Endothelial cell of umbilical vein (primary cell): ENCODE measurements at regions of chr3 and their contacts with region 1.

Region 1: GRCh38 chr3:141360888-141361598 is 7.3 kb upstream of the ZBTB38 start:
- DNase-seq: peak; percentile 92
- H3K4me3 ChIP-seq: peak overlapping the region in 1 of 3 experiments; percentile 31
- H3K27ac ChIP-seq: peak overlapping the region; percentile 53
- H3K4me1 ChIP-seq: peaks cover 18% of the 10 kb centered on the region
- H3K27me3 ChIP-seq: no peaks in the 10 kb centered on the region
- CTCF ChIP-seq: peak; percentile 69 to 72
- POLR2A ChIP-seq: no peak

Region 2: DNA sequence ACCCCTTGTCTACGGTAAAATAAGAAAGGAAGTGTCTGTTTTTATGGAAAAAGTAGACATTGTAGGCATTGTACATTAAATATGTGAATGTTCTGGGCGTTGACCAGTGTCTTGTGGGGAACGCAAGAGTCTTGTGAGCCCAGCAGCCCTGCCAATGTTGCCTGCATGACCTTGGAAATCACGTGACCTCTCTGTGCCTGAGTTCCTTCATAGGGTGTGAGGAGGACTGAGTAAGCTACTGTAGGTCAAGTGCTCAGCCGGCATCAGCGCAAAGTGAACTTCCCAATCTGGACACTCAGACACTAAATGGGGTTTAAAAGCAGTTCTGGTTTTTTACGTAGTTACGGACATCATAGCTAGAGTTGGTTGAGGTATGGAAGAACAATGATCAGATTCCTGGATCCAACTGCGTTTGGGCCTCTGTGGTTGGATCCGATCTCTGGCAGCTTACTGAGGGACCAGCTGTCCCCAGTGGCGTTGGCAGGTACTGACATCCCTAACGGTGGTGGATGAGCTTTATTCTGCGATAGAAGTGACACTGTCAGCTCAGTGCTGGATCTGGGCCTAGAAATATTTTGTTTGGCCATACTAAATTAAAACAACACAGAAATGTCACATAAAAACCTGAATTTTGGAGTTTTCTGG is 246.1 kb before region 1 on chr3:
- CTCF ChIA-PET with region 1: no interaction called
- POLR2A ChIA-PET with region 1: no interaction called
- dilution Hi-C with region 1: no loop called
- intact Hi-C with region 1: no loop called
- DNase-seq: no peak
- H3K4me3 ChIP-seq: no peak overlapping the region
- H3K27ac ChIP-seq: no peak overlapping the region
- H3K4me1 ChIP-seq: no peaks in the 10 kb centered on the region
- H3K27me3 ChIP-seq: no peaks in the 10 kb centered on the region
- CTCF ChIP-seq: peak; percentile 22 to 24
- POLR2A ChIP-seq: no peak

Region 3: DNA sequence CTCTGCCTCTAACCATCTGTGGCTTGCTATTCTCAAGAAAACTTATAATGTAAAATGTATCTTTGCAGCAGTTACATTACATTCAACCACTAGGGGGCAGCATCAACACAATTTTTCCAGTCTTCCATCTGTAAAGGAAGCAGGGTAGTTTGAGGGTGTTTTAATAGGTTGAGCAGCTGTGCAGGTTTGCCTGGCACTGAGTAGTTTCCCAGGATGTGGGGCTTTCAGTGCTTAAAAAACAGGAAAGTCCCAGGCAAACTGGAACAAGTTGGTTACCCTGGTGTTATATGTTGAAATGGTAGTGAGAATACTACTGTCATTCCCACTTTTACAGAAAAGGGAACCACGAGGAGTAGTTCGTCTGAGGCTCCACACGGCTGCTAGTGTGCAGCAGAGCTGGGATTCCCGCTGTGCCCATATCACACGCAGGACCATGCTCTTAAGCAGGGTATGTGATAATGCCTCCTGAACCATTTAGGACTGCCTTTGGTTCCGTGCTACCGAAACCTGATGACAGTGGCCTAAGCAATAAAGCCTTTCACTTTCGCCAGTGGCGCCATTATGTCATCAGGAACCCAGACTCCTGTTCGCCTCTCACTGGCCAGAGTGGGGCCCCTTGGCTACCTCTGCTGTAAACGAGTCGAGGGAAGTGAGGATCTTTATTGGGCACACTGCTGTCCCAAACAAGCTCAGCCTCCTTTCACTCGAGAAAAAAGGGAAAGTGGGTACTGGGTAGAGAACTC is 57.4 kb before region 1 on chr3:
- CTCF ChIA-PET with region 1: interaction called, 25 read pairs
- POLR2A ChIA-PET with region 1: no interaction called
- dilution Hi-C with region 1: no loop called
- intact Hi-C with region 1: no loop called
- DNase-seq: peak; percentile 86
- H3K4me3 ChIP-seq: no peak overlapping the region
- H3K27ac ChIP-seq: no peak overlapping the region
- H3K4me1 ChIP-seq: no peaks in the 10 kb centered on the region
- H3K27me3 ChIP-seq: peaks cover 0 to 6% of the 10 kb centered on the region in 2 experiments
- CTCF ChIP-seq: peak; percentile 53 to 68
- POLR2A ChIP-seq: no peak

Region 4: DNA sequence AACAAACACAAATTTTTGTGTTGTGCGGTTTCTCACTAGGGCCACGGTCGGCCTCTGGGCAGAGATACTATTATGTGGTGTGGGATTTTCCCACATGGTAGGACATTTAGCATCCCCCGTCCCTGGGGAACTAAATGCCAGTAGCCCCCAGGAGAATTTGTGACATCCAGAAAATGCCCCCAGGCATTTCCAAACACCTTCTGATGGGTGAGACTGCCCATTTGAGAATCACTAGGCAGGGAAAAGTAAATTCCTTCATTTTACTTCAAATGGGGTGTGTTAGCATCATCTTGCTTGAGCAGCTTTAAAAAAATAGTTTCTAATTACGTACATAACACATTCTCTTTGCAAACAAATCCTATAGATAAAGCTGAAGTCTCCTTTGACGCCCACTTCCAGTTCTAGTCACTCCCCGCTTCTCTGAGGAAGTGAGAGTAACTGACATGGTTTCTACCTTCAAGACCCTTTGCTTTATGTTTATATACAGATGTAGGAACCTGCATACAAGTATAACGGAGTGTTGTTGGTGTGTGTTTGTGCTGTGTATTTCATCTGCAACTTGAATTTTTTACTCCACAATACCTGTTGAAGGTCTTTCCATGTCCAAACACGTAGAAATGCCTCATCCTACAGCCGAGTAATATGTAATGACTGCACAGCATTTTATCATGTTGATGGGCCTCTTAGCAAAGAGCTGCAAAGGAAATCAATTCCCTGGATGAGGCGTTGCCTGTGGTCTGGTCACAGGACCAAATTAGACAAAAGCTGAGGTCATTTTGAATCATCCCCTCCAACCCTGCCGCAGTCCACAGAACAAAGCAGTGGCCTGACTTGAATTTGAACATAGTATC is 24.1 kb before region 1 on chr3:
- CTCF ChIA-PET with region 1: interaction called, 15 read pairs
- POLR2A ChIA-PET with region 1: no interaction called
- dilution Hi-C with region 1: no loop called
- intact Hi-C with region 1: no loop called
- DNase-seq: no peak
- H3K4me3 ChIP-seq: no peak overlapping the region
- H3K27ac ChIP-seq: peak overlapping the region; percentile 61
- H3K4me1 ChIP-seq: peaks cover 26% of the 10 kb centered on the region
- H3K27me3 ChIP-seq: no peaks in the 10 kb centered on the region
- CTCF ChIP-seq: no peak
- POLR2A ChIP-seq: no peak

Region 5: GRCh38 chr3:141388823-141389621 is 28.0 kb after region 1 on chr3:
- CTCF ChIA-PET with region 1: interaction called, 11 read pairs
- POLR2A ChIA-PET with region 1: no interaction called
- dilution Hi-C with region 1: no loop called
- intact Hi-C with region 1: no loop called
- DNase-seq: peak; percentile 63
- H3K4me3 ChIP-seq: no peak overlapping the region
- H3K27ac ChIP-seq: no peak overlapping the region
- H3K4me1 ChIP-seq: peaks cover 13% of the 10 kb centered on the region
- H3K27me3 ChIP-seq: no peaks in the 10 kb centered on the region
- CTCF ChIP-seq: no peak
- POLR2A ChIP-seq: no peak

Region 6: DNA sequence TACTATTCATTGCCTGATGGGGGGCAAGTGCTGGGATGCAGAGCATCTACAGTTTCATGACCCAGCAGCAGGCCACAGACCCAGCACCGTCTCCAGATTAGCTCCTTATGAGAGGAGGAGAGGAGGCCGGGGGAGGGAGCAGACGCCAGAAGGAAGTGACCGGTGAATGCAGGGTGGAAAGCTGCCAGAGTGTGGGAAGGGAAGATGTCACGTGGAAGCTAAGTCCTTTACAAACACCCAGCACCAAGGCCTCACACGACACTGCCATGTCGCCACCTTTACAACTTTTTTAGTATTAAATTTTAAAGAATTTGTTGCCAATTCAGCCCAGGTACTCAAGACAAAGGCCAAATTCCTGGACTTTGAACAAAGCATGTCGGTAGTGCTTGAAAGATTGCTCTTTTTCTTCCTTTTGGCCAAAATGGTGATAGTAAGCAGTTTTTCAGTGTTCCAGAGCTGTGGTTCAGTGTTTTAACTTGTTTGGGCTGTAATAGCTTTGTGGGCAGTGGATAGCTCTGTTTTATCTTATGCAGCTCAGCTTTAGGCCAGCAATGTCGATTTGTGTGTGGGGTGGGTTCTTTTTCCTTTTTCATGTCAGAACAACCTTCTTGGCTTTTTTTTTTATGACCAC is 65.5 kb after region 1 on chr3:
- CTCF ChIA-PET with region 1: interaction called, 38 read pairs
- POLR2A ChIA-PET with region 1: no interaction called
- dilution Hi-C with region 1: no loop called
- intact Hi-C with region 1: loop called (anchors 1 kb)
- DNase-seq: peak; percentile 89
- H3K4me3 ChIP-seq: no peak overlapping the region
- H3K27ac ChIP-seq: peak overlapping the region; percentile 44
- H3K4me1 ChIP-seq: peaks cover 16% of the 10 kb centered on the region
- H3K27me3 ChIP-seq: no peaks in the 10 kb centered on the region
- CTCF ChIP-seq: no peak
- POLR2A ChIP-seq: no peak

Region 7: GRCh38 chr3:141460097-141460704 is 99.2 kb after region 1 on chr3:
- CTCF ChIA-PET with region 1: interaction called, 153 read pairs
- POLR2A ChIA-PET with region 1: no interaction called
- dilution Hi-C with region 1: no loop called
- intact Hi-C with region 1: no loop called
- DNase-seq: peak; percentile 77
- H3K4me3 ChIP-seq: no peak overlapping the region
- H3K27ac ChIP-seq: no peak overlapping the region
- H3K4me1 ChIP-seq: no peaks in the 10 kb centered on the region
- H3K27me3 ChIP-seq: no peaks in the 10 kb centered on the region
- CTCF ChIP-seq: peak; percentile 83 to 86
- POLR2A ChIP-seq: no peak

Region 8: DNA sequence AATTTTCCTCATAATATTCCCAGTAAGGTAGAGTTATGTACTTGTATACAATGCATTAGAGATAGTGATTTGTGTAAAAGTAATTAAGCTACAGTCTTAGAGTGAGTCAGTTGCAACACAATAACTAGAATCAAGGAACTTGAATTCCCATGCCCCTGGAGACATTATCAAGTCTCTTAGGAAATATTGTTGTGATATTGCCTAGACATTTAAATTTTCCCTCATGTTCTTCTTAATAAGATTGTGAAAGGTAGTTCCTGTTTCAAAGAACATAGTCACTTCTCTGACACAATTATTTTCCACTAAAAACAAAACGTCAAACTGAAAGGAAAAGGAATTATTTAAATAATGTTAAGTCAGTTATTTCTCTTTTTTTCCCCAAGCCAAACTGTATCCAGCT is 502.4 kb after region 1 on chr3:
- CTCF ChIA-PET with region 1: no interaction called
- POLR2A ChIA-PET with region 1: no interaction called
- dilution Hi-C with region 1: no loop called
- intact Hi-C with region 1: no loop called
- DNase-seq: peak; percentile 30
- H3K4me3 ChIP-seq: no peak overlapping the region
- H3K27ac ChIP-seq: no peak overlapping the region
- H3K4me1 ChIP-seq: peaks cover 19% of the 10 kb centered on the region
- H3K27me3 ChIP-seq: no peaks in the 10 kb centered on the region
- CTCF ChIP-seq: no peak
- POLR2A ChIP-seq: no peak